ENCODE measurements at regions of chr5 and their contacts with region 1.

Region 1: DNA sequence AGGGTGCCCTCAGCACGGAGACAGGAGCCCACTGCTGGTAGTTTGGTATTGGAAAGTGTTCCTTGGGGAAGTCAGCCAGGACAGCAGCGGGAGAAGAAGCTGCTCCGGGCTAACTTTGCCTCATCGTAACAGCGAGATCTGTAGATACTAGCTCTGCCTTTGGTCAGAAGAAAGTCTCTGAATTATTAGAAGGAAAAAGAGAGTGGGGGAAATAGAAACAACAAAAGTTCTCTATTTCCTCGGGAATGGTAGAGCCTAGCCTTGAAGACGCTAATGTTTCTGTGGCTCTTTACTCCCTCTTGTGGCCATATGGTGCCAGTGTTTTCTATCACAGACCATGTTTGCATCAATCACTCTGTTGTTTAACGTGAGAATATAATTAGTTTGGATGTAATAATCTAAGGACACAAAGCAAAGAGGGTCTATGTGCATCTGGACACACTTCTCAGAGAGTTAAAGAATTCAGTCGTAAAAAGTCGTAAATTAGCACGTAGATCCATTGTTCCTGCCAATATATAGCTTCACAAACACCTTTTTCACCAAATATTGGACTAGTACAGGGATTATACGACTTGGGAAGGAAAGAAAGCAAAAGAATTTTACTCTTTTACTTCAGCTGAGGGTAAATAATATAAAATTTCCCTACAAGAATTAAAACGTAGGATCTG is 40.2 kb upstream of the HSD17B4 start:
- DNase-seq: no peak
- ATAC-seq: peak; percentile 74
- H3K4me3 Mint-ChIP-seq: peak overlapping the region; percentile 90
- H3K27ac Mint-ChIP-seq: peak overlapping the region; percentile 89
- H3K4me1 Mint-ChIP-seq: peaks cover 81% of the 10 kb centered on the region
- H3K27me3 Mint-ChIP-seq: no peaks in the 10 kb centered on the region
- CTCF ChIP-seq: peak; percentile 98

Region 2: DNA sequence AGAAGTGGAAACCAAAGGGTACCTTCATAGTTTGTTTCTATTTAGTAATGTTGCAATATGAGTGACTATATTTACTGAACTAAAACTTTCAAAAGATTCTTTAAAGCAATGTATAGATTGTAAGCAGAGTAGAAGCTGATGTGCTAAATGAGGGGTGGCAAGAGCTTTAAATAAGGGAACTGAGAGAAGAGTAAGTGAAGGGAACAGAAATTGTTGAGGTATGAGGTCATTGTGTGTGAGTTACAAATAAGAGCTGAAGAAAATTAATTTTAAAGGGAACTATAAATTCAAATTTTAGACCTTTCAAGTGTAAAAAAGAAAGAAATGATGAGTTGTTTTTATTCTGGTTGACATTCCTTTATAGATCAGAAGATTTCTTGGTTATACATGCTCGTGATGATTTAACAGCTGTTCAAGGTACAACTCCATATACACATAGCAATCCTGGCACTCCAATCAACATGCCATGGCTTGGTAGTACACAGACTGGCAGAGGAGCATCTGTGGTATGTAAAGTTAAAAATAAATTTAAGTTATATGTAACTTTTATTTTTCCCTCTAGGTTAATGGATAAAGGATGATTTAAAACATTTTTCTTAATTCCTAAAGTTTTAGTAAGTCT is 191.4 kb before region 1 on chr5:
- CTCF ChIA-PET with region 1: interaction called, 20 read pairs
- POLR2A ChIA-PET with region 1: interaction called, 5 read pairs
- intact Hi-C with region 1: loop called (anchors 2 kb)
- DNase-seq: no peak
- ATAC-seq: peak; percentile 97
- H3K4me3 Mint-ChIP-seq: peak overlapping the region; percentile 4
- H3K27ac Mint-ChIP-seq: peak overlapping the region; percentile 47
- H3K4me1 Mint-ChIP-seq: peaks cover 25% of the 10 kb centered on the region
- H3K27me3 Mint-ChIP-seq: no peaks in the 10 kb centered on the region
- CTCF ChIP-seq: no peak

Region 3: GRCh38 chr5:119274767-119275130 is 137.3 kb before region 1 on chr5:
- CTCF ChIA-PET with region 1: interaction called, 9 read pairs
- POLR2A ChIA-PET with region 1: interaction called, 16 read pairs
- intact Hi-C with region 1: no loop called
- DNase-seq: no peak
- ATAC-seq: peak; percentile 42
- H3K4me3 Mint-ChIP-seq: peak overlapping the region; percentile 78
- H3K27ac Mint-ChIP-seq: peak overlapping the region; percentile 89
- H3K4me1 Mint-ChIP-seq: peaks cover 97% of the 10 kb centered on the region
- H3K27me3 Mint-ChIP-seq: no peaks in the 10 kb centered on the region
- CTCF ChIP-seq: no peak

Region 4: DNA sequence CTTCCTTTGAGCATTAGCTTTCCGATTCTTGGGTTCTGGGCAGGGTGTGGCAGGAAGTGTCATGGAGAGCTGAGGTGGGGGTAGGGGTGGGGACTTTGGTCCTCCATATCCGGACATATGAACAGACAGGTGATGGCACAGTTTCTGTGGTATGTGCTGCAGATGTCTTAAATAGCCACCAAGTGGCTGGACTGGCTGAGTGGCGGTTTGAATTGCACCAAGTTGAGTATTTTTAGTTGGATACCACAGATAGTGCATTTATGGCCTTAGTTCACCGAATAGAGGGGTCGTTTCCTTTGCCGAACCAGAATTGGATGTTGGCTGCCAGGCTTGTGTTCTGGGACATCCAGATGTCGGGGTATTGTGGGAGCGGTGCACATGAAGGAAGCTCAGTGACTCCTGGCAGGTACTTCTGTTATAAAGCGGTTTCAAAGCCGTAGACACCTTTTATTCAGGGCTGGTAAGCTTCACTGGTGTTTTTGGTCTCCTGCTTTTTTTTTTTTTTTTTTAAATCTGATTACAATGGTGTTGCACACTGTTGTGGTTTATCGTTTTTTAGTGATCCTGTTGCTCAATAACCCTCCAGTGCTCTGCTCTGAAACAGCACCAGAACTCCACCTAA is 71.4 kb before region 1 on chr5:
- CTCF ChIA-PET with region 1: interaction called, 34 read pairs
- POLR2A ChIA-PET with region 1: interaction called, 6 read pairs
- intact Hi-C with region 1: no loop called
- DNase-seq: no peak
- ATAC-seq: peak; percentile 25
- H3K4me3 Mint-ChIP-seq: peak overlapping the region; percentile 79
- H3K27ac Mint-ChIP-seq: peak overlapping the region; percentile 96
- H3K4me1 Mint-ChIP-seq: peaks cover 95% of the 10 kb centered on the region
- H3K27me3 Mint-ChIP-seq: no peaks in the 10 kb centered on the region
- CTCF ChIP-seq: no peak

Region 5: GRCh38 chr5:119397518-119398380 is 14.3 kb before region 1 on chr5:
- CTCF ChIA-PET with region 1: interaction called, 37 read pairs
- POLR2A ChIA-PET with region 1: interaction called, 4 read pairs
- intact Hi-C with region 1: loop called (anchors 2 kb)
- DNase-seq: no peak
- ATAC-seq: peak; percentile 45
- H3K4me3 Mint-ChIP-seq: peak overlapping the region; percentile 67
- H3K27ac Mint-ChIP-seq: peak overlapping the region; percentile 80
- H3K4me1 Mint-ChIP-seq: peaks cover 88% of the 10 kb centered on the region
- H3K27me3 Mint-ChIP-seq: no peaks in the 10 kb centered on the region
- CTCF ChIP-seq: no peak

Region 6: GRCh38 chr5:119524485-119524884 is 112.4 kb after region 1 on chr5:
- CTCF ChIA-PET with region 1: no interaction called
- POLR2A ChIA-PET with region 1: no interaction called
- intact Hi-C with region 1: no loop called
- DNase-seq: no peak
- ATAC-seq: no peak
- H3K4me3 Mint-ChIP-seq: no peak overlapping the region
- H3K27ac Mint-ChIP-seq: no peak overlapping the region
- H3K4me1 Mint-ChIP-seq: peaks cover 7% of the 10 kb centered on the region
- H3K27me3 Mint-ChIP-seq: no peaks in the 10 kb centered on the region
- CTCF ChIP-seq: no peak

Region 7: GRCh38 chr5:119537704-119538103 is 125.6 kb after region 1 on chr5:
- CTCF ChIA-PET with region 1: no interaction called
- POLR2A ChIA-PET with region 1: no interaction called
- intact Hi-C with region 1: no loop called
- DNase-seq: no peak
- ATAC-seq: peak; percentile 74
- H3K4me3 Mint-ChIP-seq: no peak overlapping the region
- H3K27ac Mint-ChIP-seq: peak overlapping the region; percentile 25
- H3K4me1 Mint-ChIP-seq: peaks cover 12% of the 10 kb centered on the region
- H3K27me3 Mint-ChIP-seq: no peaks in the 10 kb centered on the region
- CTCF ChIP-seq: no peak